ENCODE measurements at regions of chr5 and their contacts with region 1.

Region 1: GRCh38 chr5:33981408-33982162 is 2.9 kb downstream of the SLC45A2 start:
- DNase-seq: no peak
- ATAC-seq: no peak

Region 2: GRCh38 chr5:34452170-34452830 is 470.7 kb after region 1 on chr5:
- intact Hi-C with region 1: loop called in 1 of 2 experiments (anchors 10 kb)
- DNase-seq: no peak
- ATAC-seq: peak; percentile 59